ENCODE measurements at regions of chr7 and their contacts with region 1.

Region 1: DNA sequence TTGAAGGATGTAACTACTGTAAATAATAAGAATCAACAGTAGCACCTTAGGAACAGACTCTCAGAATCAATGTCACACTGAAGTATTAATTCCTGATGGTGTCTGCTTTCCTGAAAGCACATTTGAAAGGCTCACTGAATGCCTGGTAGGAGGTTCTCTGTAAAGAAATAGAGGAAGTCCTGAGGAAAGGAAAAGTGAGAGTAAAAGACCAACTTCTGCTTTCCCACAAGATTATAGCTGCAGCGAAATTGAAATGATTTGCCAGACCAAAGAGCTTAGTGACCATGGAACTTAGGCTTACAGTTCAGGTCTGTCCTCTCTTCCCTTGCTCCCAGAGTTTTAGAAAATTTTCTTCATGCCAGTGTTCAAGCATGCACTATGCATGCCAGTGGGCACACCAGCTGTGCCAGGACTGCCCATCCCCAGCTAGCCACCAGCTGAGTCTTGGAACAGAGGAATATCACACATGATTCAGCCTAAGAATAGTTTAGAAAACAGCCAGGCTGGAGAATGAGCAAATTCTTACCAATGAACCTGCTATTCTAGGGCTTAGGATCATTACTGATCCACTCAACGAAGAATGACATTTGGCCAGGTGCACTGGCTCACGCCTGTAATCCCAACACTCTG is 123.2 kb downstream of the HERPUD2 start:
- DNase-seq: no peak
- H3K4me3 Mint-ChIP-seq: no peak overlapping the region
- H3K27ac Mint-ChIP-seq: no peak overlapping the region
- H3K4me1 Mint-ChIP-seq: no peaks in the 10 kb centered on the region
- H3K27me3 Mint-ChIP-seq: peaks cover 85% of the 10 kb centered on the region
- CTCF ChIP-seq: no peak

Region 2: DNA sequence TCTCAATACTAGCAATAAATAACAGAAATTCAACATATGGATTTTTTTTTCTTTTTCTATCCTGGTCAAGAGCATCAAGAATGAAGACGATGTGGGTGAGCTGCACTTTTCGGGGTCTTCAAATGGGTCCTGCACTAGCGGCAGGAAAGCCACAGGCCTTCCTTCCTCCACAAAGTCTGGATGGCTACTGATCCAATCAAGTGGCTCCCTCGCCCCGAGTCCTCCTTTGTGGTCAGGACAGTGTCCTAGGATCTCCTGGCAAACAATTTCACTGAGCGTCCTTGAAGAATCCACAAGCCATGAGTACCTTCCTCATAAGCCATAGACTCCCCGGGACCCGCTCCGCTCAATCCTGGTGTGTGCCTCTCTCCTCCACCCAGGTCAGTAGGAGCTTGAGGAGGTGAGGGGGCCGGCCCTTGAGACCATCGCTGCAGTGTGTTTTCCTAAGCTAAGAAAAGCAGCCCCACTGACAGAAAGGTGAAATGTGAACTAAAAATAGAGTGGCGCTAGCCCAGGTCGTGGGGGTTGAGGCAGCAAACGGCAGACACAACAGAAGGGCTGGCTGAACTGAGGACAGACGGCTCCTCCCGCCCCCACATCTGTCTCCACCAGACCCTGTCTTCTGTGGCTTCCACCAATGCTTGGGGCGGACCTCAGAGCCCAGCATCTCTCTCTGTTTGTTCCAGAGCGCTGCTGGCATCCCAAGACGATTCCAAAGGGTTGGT is 79.1 kb before region 1 on chr7:
- CTCF ChIA-PET with region 1: interaction called, 15 read pairs
- intact Hi-C with region 1: no loop called
- DNase-seq: no peak
- H3K4me3 Mint-ChIP-seq: no peak overlapping the region
- H3K27ac Mint-ChIP-seq: no peak overlapping the region
- H3K4me1 Mint-ChIP-seq: no peaks in the 10 kb centered on the region
- H3K27me3 Mint-ChIP-seq: peaks cover 25% of the 10 kb centered on the region
- CTCF ChIP-seq: no peak

Region 3: DNA sequence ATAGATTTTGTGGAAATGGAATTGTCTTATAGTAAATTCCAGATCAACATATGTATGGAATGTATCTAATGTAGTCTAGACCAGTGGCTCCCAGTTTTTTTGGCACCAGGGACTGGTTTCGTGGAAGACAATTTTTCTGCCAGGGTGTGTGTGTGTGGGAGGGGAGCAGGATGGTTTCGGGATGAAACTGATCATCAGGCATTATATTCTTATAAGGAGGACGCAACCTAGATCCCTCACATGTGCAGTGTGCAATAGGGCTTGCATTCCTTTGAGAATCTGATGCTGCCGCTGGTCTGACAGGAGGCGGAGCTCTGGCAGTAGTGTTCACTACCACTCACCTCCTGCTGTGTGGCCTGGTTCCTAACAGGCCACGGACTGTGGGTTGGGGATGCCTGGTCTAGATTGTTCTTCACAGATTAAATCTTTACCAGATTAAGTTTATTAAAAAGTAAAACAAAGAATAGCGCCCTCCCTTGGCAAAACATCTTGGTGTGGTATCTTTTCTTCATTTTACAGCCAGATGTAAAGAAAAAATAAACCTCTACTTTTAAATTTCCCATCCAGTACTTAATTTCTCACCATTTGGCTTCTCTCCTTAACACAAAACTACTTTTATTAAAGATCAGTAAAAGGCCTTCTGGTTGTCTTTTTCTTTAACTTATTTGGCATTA is 277.6 kb after region 1 on chr7:
- CTCF ChIA-PET with region 1: no interaction called
- intact Hi-C with region 1: no loop called
- DNase-seq: no peak
- H3K4me3 Mint-ChIP-seq: no peak overlapping the region
- H3K27ac Mint-ChIP-seq: no peak overlapping the region
- H3K4me1 Mint-ChIP-seq: peaks cover 10% of the 10 kb centered on the region
- H3K27me3 Mint-ChIP-seq: no peaks in the 10 kb centered on the region
- CTCF ChIP-seq: no peak

Measured in Calu3 (cell line).